ENCODE measurements at regions of chr18 and their contacts with region 1.

Region 1: DNA sequence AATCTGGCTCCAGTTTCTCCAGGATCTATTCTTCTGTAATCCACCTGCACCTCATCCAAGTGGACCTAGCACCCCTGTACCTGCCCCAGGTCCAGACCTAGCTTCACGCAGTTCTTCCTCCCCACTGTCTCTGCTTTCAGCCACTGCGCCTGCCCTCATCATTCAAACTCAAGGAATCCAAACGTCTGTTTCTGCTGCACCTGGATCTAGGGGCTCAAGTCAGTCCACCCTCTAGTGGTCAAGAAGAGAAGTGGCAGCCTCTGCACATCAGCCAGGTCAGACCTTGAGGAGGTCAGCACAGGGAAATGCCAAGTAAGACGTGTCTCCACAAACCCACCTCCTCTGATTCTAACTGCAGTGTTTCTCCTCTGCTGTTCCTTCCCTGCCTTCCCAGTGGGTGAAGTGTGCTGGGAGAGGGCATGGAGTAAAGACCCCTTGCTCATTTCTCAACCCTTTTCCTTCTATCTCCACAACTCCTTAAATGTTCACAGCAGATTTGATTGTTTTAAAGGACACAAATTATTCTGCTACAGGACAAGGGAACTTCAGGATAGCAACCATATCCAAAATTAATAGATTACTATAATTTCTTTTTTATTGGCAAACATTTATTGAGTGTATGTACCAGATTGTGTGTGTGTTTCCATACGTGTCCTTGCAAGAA is 8.6 kb upstream of the RNF152 start:
- DNase-seq: no peak
- H3K4me3 ChIP-seq: no peak overlapping the region
- CTCF ChIP-seq: peak; percentile 93

Region 2: GRCh38 chr18:61551586-61551985 is 349.9 kb before region 1 on chr18:
- CTCF ChIA-PET with region 1: interaction called, 10 read pairs
- POLR2A ChIA-PET with region 1: no interaction called
- DNase-seq: peak; percentile 62
- H3K4me3 ChIP-seq: no peak overlapping the region
- CTCF ChIP-seq: peak; percentile 86

Region 3: GRCh38 chr18:61635901-61636528 is 265.4 kb before region 1 on chr18:
- CTCF ChIA-PET with region 1: interaction called, 22 read pairs
- POLR2A ChIA-PET with region 1: no interaction called
- DNase-seq: peak; percentile 16
- H3K4me3 ChIP-seq: no peak overlapping the region
- CTCF ChIP-seq: peak; percentile 79

Measured in AG04449 (cell line).